CD4-positive, alpha-beta T cell (primary cell): ENCODE measurements at regions of chr7 and their contacts with region 1.

Region 1: DNA sequence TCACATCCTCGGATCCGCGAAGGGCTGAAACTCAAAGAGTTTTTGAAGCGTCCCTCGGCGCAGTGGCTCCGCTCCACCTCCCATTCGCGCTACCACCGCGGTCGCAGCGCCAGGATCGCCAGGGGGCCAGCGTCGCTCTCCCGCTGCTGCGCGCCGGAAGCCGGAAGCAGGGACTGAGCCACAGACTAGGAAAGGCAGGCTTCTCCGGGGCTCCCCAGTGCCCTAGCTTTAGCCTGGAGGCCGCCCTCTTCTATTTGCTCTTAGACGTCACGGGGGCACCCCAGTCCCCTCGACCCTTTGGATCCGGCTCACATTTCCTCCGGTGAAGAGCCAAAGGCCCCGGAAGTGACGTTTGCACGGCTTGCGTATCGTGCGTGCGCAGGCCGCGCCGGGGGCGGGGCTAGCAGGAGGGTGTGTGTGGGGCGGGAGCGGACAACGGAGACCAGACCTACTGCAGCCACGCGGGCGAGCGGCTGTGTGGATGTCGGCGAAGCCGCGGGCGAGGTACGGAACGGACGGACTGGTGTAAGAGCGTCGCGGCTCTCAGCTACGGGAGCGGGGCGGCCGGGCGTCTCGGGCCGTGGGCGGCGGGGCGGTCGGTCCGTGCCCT is 25.5 kb downstream of the KCTD7 start:
- DNase-seq: peak; percentile 94 to 99 (median 96)
- ATAC-seq: peak; percentile 90
- H3K4me3 ChIP-seq: peak overlapping the region; percentile 97
- H3K4me3 Mint-ChIP-seq: peak overlapping the region; percentile 99
- H3K27ac ChIP-seq: peak overlapping the region; percentile 91 to 92
- H3K27ac Mint-ChIP-seq: peak overlapping the region; percentile 97
- H3K4me1 ChIP-seq: peaks cover 26% of the 10 kb centered on the region
- H3K4me1 Mint-ChIP-seq: peaks cover 47% of the 10 kb centered on the region
- H3K27me3 ChIP-seq: no peaks in the 10 kb centered on the region
- H3K27me3 Mint-ChIP-seq: no peaks in the 10 kb centered on the region
- CTCF ChIP-seq: peak; percentile 35

Region 2: DNA sequence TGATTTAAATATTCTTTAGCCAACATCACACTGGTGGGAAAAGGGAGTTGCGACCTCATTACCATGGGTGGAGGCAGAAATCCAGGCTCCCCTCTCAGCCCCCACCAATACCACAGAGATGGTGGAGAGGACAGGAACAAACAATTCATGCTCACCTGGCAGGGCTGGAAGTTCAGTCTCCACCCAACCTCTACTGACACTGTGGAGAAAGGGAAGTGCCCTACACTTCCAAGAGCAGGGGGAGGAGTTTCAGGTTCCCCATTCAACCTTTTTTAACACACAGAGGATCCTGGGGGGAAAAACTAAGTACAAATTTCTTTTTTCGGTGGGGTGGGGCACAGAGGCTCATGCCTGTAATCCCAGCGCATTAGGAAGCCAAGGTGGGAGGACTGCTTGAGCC is 235.7 kb before region 1 on chr7:
- CTCF ChIA-PET with region 1: no interaction called
- POLR2A ChIA-PET with region 1: no interaction called
- intact Hi-C with region 1: no loop called
- DNase-seq: no peak
- ATAC-seq: no peak
- H3K4me3 ChIP-seq: no peak overlapping the region
- H3K4me3 Mint-ChIP-seq: no peak overlapping the region
- H3K27ac ChIP-seq: no peak overlapping the region
- H3K27ac Mint-ChIP-seq: no peak overlapping the region
- H3K4me1 ChIP-seq: peaks cover 9% of the 10 kb centered on the region
- H3K4me1 Mint-ChIP-seq: peaks cover 5% of the 10 kb centered on the region
- H3K27me3 ChIP-seq: no peaks in the 10 kb centered on the region
- H3K27me3 Mint-ChIP-seq: no peaks in the 10 kb centered on the region
- CTCF ChIP-seq: no peak

Region 3: GRCh38 chr7:66591799-66592596 is 62.2 kb before region 1 on chr7:
- CTCF ChIA-PET with region 1: no interaction called
- POLR2A ChIA-PET with region 1: interaction called, 4 read pairs
- intact Hi-C with region 1: loop called (anchors 1 to 2 kb)
- DNase-seq: peak; percentile 76 to 96 (median 88)
- ATAC-seq: peak; percentile 98
- H3K4me3 ChIP-seq: peak overlapping the region; percentile 97
- H3K4me3 Mint-ChIP-seq: peak overlapping the region; percentile 99
- H3K27ac ChIP-seq: peak overlapping the region; percentile 60 to 80
- H3K27ac Mint-ChIP-seq: peak overlapping the region; percentile 99
- H3K4me1 ChIP-seq: peaks cover 43% of the 10 kb centered on the region
- H3K4me1 Mint-ChIP-seq: peaks cover 47% of the 10 kb centered on the region
- H3K27me3 ChIP-seq: no peaks in the 10 kb centered on the region
- H3K27me3 Mint-ChIP-seq: no peaks in the 10 kb centered on the region
- CTCF ChIP-seq: no peak

Region 4: DNA sequence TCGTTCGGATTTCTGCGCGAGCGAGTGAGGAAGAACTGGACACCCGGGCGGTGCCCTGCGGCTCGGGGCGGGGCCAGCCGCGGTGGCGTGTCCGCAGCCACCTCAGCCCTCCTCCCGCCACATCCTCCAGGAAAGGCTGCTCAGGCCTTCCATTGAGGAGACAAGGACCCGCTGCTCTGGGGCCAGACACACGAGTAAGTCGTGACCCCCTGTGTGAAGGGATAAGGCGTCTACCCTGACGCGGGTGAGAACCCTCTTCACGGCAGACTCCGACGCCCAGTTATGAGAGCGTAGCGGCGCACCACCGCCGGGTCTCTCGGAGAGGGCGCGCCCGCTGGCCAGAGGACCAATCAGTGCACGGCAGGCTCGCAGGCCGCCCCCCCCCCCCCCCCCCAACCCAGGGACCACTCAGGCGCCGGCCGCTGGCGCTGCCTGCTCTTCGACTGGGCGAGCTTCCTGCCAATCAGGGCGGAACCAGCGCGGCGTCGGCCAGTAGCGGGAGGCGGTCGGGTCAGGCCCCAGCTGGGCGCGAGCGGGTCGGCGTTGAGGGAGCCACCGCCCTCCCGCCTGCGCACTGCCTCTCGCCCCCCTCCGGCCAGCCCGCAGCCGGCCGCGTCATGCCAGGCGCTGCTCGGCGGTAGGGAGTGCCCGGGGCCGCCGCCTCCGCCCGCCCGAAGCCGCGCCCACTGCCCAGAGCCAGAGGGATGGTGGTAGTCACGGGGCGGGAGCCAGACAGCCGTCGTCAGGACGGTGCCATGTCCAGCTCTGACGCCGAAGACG is 25.7 kb before region 1 on chr7 and contains the start of gene KCTD7:
- CTCF ChIA-PET with region 1: interaction called, 3 read pairs
- POLR2A ChIA-PET with region 1: interaction called, 35 read pairs
- intact Hi-C with region 1: loop called (anchors 1 kb)
- DNase-seq: peak; percentile 84 to 98 (median 93)
- ATAC-seq: peak; percentile 90
- H3K4me3 ChIP-seq: peak within 1 kb of the TSS; percentile 75
- H3K4me3 Mint-ChIP-seq: peak within 1 kb of the TSS; percentile 92
- H3K27ac ChIP-seq: peak within 1 kb of the TSS; percentile 81 to 88
- H3K27ac Mint-ChIP-seq: peak within 1 kb of the TSS; percentile 91
- H3K4me1 ChIP-seq: peaks cover 54% of the 10 kb centered on the region
- H3K4me1 Mint-ChIP-seq: peaks cover 49% of the 10 kb centered on the region
- H3K27me3 ChIP-seq: no peaks in the 10 kb centered on the region
- H3K27me3 Mint-ChIP-seq: no peaks in the 10 kb centered on the region
- CTCF ChIP-seq: no peak
- total RNA-seq, gene KCTD7: 15.2 TPM

Region 5: GRCh38 chr7:66681491-66682349 is 27.5 kb after region 1 on chr7:
- CTCF ChIA-PET with region 1: interaction called, 5 read pairs
- POLR2A ChIA-PET with region 1: interaction called, 8 read pairs
- intact Hi-C with region 1: loop called (anchors 1 kb)
- DNase-seq: peak; percentile 87 to 98 (median 95)
- ATAC-seq: peak; percentile 95
- H3K4me3 ChIP-seq: peak overlapping the region; percentile 95
- H3K4me3 Mint-ChIP-seq: peak overlapping the region; percentile 99
- H3K27ac ChIP-seq: peak overlapping the region; percentile 96 to 99
- H3K27ac Mint-ChIP-seq: peak overlapping the region; percentile 98
- H3K4me1 ChIP-seq: peaks cover 29% of the 10 kb centered on the region
- H3K4me1 Mint-ChIP-seq: peaks cover 40% of the 10 kb centered on the region
- H3K27me3 ChIP-seq: no peaks in the 10 kb centered on the region
- H3K27me3 Mint-ChIP-seq: no peaks in the 10 kb centered on the region
- CTCF ChIP-seq: no peak

Region 6: DNA sequence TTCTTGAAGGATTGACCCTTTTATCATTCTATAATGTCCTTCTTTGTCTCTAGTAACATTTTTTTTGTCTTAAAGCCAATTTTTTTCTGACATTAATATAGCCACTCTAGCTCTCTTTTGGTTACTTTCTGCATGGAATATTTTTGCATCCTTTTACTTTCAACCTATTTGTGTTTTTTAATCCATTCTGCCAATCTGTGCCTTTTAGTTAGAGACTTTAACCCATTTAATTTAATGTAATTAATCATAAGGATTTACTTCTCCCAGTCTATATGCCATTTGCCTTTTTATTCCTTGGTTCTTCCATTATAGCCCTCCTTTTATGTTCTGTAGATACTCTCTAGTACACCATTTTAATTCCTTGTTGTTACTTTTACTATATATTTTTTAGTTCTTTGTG is 53.6 kb after region 1 on chr7:
- CTCF ChIA-PET with region 1: no interaction called
- POLR2A ChIA-PET with region 1: no interaction called
- intact Hi-C with region 1: no loop called
- DNase-seq: no peak
- ATAC-seq: no peak
- H3K4me3 ChIP-seq: no peak overlapping the region
- H3K4me3 Mint-ChIP-seq: no peak overlapping the region
- H3K27ac ChIP-seq: no peak overlapping the region
- H3K27ac Mint-ChIP-seq: no peak overlapping the region
- H3K4me1 ChIP-seq: no peaks in the 10 kb centered on the region
- H3K4me1 Mint-ChIP-seq: no peaks in the 10 kb centered on the region
- H3K27me3 ChIP-seq: no peaks in the 10 kb centered on the region
- H3K27me3 Mint-ChIP-seq: no peaks in the 10 kb centered on the region
- CTCF ChIP-seq: no peak

Region 7: DNA sequence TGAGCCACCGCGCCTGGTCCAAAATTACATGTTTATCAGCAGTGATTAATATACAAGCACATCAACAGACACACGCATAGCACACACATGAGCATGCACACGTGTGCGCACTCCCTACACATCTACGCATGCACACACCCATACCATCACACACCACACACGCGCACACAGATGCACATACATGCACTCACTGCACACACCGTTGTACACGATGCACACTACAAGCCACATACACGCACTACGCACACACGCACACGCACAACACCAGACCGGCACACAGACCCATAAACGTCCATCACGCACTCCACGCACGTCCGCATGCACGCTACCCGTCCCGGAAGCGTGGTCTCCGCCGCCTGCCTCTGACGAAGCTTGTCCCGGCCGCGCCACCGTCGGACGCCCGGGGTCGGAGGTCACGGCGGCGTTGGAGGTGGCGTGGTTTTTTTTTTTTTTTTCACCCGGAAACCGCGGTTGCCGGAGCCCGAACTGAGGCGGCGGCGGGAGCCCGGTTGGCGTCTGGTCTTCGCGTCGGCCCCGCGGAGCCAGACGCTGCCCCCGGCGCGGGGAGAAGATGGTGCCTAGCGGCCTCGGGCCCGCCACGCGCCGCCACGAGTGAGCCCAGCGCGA is 266.7 kb after region 1 on chr7 and contains the start of gene TMEM248:
- CTCF ChIA-PET with region 1: no interaction called
- POLR2A ChIA-PET with region 1: no interaction called
- intact Hi-C with region 1: loop called in 1 of 2 experiments (anchors 10 kb)
- DNase-seq: peak; percentile 85 to 96 (median 91)
- ATAC-seq: peak; percentile 86
- H3K4me3 ChIP-seq: peak within 1 kb of the TSS; percentile 95
- H3K4me3 Mint-ChIP-seq: peak within 1 kb of the TSS; percentile 100
- H3K27ac ChIP-seq: peak within 1 kb of the TSS; percentile 76 to 90
- H3K27ac Mint-ChIP-seq: peak within 1 kb of the TSS; percentile 99
- H3K4me1 ChIP-seq: peaks cover 42% of the 10 kb centered on the region
- H3K4me1 Mint-ChIP-seq: peaks cover 43% of the 10 kb centered on the region
- H3K27me3 ChIP-seq: no peaks in the 10 kb centered on the region
- H3K27me3 Mint-ChIP-seq: no peaks in the 10 kb centered on the region
- CTCF ChIP-seq: no peak
- total RNA-seq, gene TMEM248: 64.7 to 67.4 TPM